ENCODE measurements at regions of chr3 and their contacts with region 1.

Region 1: GRCh38 chr3:181709537-181710279 is 2.0 kb upstream of the SOX2 start:
- DNase-seq: peak; percentile 48 to 86
- H3K4me3 ChIP-seq: peak overlapping the region; percentile 51
- H3K27ac ChIP-seq: no peak overlapping the region
- H3K4me1 ChIP-seq: peaks cover 20% of the 10 kb centered on the region
- H3K27me3 ChIP-seq: peaks cover 22% of the 10 kb centered on the region
- CTCF ChIP-seq: peak; percentile 97

Region 2: DNA sequence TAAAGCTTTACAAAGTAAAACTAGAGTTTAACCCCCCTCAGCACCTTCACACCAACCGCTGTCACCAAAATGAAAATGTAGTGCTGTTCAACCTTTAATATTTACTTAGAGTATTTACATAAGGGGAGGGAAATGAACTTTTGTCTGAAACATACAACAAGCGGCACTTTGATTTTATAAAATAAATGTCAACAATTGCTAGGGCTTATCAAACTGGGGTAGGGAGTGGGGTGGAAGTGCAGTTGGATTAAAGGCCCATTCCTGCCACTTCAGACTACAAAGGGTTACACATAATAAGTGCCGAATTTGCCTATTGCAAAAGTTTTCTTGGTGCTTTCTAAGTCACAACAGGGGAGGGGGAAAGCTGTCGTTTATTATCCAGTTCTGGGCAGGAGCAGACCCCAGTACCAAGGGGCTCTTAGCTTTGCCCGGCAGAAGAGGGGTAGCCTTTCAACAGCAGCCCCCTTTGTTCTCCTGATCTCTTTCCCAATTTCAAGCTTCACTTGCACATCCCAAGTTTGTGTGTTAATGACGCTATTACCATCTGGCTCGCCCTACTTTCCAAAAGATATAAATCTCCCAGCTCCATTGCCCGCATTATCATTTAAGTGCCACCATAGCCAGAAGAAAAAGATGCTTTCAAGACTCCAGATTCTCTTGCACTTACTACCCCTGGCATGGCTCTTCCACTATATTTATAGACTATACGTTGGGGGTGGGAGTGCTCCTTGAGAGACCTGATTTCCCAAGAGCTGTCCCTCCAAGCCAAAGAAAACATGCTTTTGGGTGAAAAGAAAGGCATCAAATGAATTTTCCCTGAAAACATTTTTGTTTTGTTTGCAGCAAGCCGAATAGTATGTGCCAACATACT is 19.0 kb after region 1 on chr3:
- CTCF ChIA-PET with region 1: no interaction called
- POLR2A ChIA-PET with region 1: interaction called, 11 read pairs
- intact Hi-C with region 1: no loop called
- DNase-seq: peak in 1 of 2 experiments; percentile 12
- H3K4me3 ChIP-seq: no peak overlapping the region
- H3K27ac ChIP-seq: no peak overlapping the region
- H3K4me1 ChIP-seq: no peaks in the 10 kb centered on the region
- H3K27me3 ChIP-seq: peaks cover 28% of the 10 kb centered on the region
- CTCF ChIP-seq: no peak

Region 3: DNA sequence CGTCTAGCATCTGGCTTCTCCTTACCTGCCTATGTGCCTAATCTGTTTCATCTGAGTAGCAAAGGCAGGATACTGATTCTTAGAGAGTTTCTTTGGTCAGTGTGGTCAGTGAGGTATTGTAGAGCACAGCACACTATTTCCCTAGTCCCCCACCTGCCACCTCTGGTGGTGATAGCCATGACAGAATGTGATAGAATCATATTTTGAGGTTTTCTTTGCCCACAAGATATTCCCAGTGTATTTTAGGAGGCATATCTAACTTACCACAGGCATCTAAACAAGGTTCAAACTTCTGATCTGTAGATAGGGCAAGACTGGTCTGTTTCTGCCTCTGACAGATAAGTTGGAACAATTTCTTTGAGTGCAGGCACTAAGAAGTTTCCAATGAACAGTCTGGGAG is 190.0 kb after region 1 on chr3:
- CTCF ChIA-PET with region 1: no interaction called
- POLR2A ChIA-PET with region 1: no interaction called
- intact Hi-C with region 1: loop called (anchors 2 kb)
- DNase-seq: peak; percentile 64 to 66
- H3K4me3 ChIP-seq: no peak overlapping the region
- H3K27ac ChIP-seq: no peak overlapping the region
- H3K4me1 ChIP-seq: no peaks in the 10 kb centered on the region
- H3K27me3 ChIP-seq: no peaks in the 10 kb centered on the region
- CTCF ChIP-seq: no peak

Region 4: DNA sequence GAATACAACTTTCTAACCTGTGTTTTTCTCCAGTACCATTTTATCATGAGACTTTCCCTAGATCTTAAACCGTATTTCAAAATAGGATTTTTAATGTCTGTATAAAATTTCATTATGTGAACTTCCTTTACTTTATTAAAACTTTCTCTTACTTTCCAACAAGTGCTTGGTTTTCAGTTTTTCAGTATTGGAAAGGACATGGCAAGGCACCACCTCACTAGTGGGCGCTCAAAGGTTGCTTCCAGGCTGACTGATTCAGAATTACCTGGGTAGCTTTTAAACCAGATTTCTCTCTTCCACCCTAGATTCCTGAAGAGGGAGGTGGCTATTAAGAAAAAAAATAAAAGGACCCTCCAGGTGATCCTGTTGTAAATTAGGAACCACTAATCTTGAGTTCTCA is 238.6 kb after region 1 on chr3:
- CTCF ChIA-PET with region 1: no interaction called
- POLR2A ChIA-PET with region 1: no interaction called
- intact Hi-C with region 1: loop called (anchors 5 kb)
- DNase-seq: peak in 1 of 2 experiments; percentile 11
- H3K4me3 ChIP-seq: no peak overlapping the region
- H3K27ac ChIP-seq: no peak overlapping the region
- H3K4me1 ChIP-seq: no peaks in the 10 kb centered on the region
- H3K27me3 ChIP-seq: no peaks in the 10 kb centered on the region
- CTCF ChIP-seq: peak; percentile 59; the same call in 1 of the 2 replicates

Region 5: DNA sequence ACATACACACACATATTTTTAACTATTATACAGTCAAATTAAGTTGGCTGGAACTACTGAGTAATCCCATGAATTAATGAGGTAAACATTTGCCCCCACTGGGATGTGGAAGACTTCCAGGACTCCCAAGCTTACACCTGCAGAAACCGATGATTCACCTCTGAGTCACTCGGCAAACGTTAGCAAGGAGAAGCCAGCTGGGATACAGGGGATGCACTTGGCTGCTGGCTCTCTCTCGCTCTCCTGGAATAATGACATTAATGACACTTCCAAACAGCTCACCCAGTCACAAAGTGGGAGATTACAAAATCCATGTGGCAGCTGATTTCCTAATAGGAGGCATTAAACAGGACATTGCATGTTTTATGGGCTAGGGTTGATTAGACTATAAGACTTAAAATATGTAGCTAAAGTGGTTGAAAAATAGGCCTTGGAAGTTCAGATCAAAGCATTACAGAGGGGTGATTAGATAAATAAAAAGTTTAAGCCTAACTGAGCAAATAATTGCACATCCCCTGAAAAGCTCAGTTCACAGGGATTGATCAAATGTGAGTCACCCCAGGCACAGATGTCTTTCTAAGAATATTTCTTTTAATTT is 502.9 kb after region 1 on chr3:
- CTCF ChIA-PET with region 1: no interaction called
- POLR2A ChIA-PET with region 1: no interaction called
- intact Hi-C with region 1: loop called (anchors 1 kb)
- DNase-seq: peak; percentile 87 to 100
- H3K4me3 ChIP-seq: no peak overlapping the region
- H3K27ac ChIP-seq: peak overlapping the region; percentile 62
- H3K4me1 ChIP-seq: peaks cover 25% of the 10 kb centered on the region
- H3K27me3 ChIP-seq: no peaks in the 10 kb centered on the region
- CTCF ChIP-seq: no peak

Region 6: GRCh38 chr3:182490596-182491491 is 781.1 kb after region 1 on chr3:
- CTCF ChIA-PET with region 1: no interaction called
- POLR2A ChIA-PET with region 1: no interaction called
- intact Hi-C with region 1: loop called (anchors 1 kb)
- DNase-seq: peak; percentile 12 to 37
- H3K4me3 ChIP-seq: no peak overlapping the region
- H3K27ac ChIP-seq: no peak overlapping the region
- H3K4me1 ChIP-seq: peaks cover 3% of the 10 kb centered on the region; the same call in 1 of the 2 replicates
- H3K27me3 ChIP-seq: no peaks in the 10 kb centered on the region
- CTCF ChIP-seq: peak; percentile 74

Region 7: GRCh38 chr3:182713743-182714517 is 1004.2 kb after region 1 on chr3:
- CTCF ChIA-PET with region 1: no interaction called
- POLR2A ChIA-PET with region 1: interaction called, 24 read pairs
- intact Hi-C with region 1: loop called (anchors 1 kb)
- DNase-seq: peak; percentile 24 to 86
- H3K4me3 ChIP-seq: no peak overlapping the region
- H3K27ac ChIP-seq: no peak overlapping the region
- H3K4me1 ChIP-seq: peaks cover 24% of the 10 kb centered on the region
- H3K27me3 ChIP-seq: no peaks in the 10 kb centered on the region
- CTCF ChIP-seq: peak; percentile 92

Measured in PC-9 (cell line).